Tibial artery (tissue), 4 donors: ENCODE measurements at regions of chrX and their contacts with region 1.

Region 1: DNA sequence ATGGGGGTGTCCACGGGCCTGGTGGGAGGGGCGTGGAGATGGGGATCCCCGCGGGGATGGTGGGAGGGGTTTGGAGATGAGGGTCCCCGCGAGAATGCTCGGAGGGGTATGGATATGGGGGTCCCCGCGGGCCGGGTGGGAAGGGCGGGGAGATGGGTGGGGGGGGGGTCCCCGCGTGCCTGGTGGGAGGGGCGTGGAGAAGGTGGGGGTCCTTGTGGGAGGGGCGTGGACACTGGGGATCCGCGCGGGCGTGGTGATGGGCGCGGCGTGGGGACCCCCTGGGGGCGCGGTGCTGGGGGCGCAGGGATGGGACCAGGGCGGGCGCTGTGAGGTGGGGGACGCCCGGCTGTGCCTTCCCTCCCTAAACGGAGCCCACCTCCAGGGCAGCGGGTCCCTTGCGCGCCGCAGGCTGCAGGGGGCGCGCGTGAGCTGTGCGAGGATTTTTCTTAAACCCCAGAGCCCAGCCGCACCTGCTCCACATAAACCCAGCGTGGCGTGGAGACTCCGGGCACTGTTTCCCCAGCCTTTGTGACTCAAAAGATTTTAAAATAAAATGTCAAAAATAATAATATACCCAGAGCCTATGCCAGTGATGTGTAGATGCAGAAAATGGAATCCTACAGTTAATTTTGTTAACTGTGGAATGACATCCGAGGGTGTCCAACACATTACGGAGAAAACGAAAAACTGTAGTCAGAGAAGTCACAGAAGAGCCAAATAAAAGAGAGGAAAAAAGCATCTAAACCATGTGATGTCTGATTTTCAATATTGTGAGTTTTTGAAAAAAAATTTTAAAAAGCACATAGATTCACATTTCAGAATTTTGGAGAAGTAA is 1.5 kb upstream of the ASMTL start:
- DNase-seq: peak; percentile 82 to 92
- H3K4me3 ChIP-seq: peak overlapping the region; percentile 75 to 86
- H3K27ac ChIP-seq: peak overlapping the region; percentile 87 to 94
- H3K4me1 ChIP-seq: peaks cover 0 to 32% (median 22%) of the 10 kb centered on the region in 4 donors
- H3K27me3 ChIP-seq: no peaks in the 10 kb centered on the region
- CTCF ChIP-seq: peak; percentile 95 to 98

Region 2: DNA sequence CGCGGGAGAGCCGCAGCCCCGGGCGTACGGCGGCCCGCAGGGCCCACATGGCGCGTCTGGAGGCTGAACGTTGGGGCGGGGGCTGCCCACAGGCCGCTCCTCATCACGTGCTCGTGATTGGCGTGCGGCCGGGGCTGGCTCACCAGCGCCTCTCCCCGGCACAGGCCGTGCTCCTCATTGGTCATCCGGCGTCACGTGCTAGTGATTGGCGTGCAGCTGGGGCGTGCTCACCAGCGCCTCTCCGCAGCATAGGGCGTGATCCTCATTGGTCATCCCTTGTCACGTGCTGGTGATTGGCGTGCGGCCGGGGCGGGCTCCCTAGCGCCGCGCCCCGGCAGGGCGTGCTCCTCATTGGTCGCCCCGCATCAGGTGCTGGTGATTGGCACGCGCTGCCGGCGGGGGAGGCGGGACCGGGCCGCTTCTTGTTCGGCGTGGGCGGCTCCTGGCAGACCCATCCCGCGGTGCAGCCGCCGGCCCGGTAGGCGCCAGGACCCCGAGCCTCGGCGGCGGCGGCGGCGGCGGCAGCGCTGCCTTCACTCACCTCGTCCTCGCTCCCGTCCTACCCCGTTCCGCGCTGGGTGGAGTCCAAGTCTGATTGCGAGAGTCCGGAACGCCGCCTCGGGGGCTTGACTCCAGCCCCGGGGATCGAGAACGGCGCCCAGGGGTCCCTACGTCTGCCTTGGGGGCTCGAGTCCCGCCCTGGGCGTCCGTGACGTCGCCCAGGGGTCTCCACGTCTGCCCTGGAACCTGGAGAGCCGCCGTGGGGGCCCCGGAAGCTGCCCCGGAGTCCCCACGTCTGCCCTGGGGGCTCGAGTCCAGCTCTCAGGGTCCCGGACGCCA is 1135.2 kb before region 1 on chrX and contains the start of gene GTPBP6:
- intact Hi-C with region 1: loop called (anchors 5 kb)
- DNase-seq: peak; percentile 99 to 100
- H3K4me3 ChIP-seq: peak within 1 kb of the TSS; percentile 76 to 97
- H3K27ac ChIP-seq: peak within 1 kb of the TSS; percentile 91 to 95
- H3K4me1 ChIP-seq: peaks cover 0 to 35% (median 17%) of the 10 kb centered on the region in 4 donors
- H3K27me3 ChIP-seq: peaks cover 0 to 4% of the 10 kb centered on the region in 2 donors
- CTCF ChIP-seq: peak in 1 of 2 experiments; percentile 28

Region 3: GRCh38 chrX:1178580-1179057 is 275.5 kb before region 1 on chrX:
- intact Hi-C with region 1: no loop called
- DNase-seq: no peak
- H3K4me3 ChIP-seq: no peak overlapping the region
- H3K27ac ChIP-seq: no peak overlapping the region
- H3K4me1 ChIP-seq: peaks cover 0 to 7% (median 0%) of the 10 kb centered on the region in 4 donors
- H3K27me3 ChIP-seq: peaks cover 0 to 3% of the 10 kb centered on the region in 2 donors
- CTCF ChIP-seq: no peak

Region 4: DNA sequence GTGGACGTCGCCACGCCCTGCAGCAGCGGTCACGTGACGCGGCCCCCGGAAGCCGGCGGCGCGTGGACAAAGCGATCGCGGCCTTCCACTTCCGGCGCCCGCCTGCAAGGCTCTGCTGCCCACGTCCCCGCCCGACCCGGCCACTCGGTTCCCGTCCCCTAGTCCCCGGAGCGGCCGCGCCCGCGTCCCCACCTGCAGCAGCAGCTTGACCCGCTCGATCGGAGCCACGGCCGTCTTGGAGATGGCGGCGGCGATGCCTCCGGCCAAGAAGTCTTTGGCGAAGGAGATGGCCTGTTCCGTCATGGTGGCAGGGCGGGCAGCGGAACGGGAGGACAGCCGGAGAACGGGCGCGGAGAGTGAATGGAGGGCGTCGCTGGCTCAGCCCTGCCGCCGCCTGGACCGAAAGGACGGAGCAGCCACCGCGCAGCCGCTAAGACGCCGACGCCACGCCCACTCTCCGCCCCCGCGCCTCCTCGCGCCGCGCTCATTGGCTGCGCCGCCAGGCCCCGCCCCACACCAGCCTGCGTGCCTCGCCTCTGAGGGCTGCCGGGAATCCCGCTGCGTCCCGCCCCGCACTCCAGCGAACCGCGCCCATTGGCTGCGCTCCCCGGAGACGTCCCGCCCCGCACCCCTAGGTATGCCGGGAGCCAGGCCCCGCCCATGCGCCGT is 62.3 kb before region 1 on chrX and contains the start of gene SLC25A6:
- intact Hi-C with region 1: loop called (anchors 2 kb)
- DNase-seq: peak; percentile 97 to 99
- H3K4me3 ChIP-seq: peak within 1 kb of the TSS; percentile 89 to 92
- H3K27ac ChIP-seq: peak within 1 kb of the TSS; percentile 97 to 98
- H3K4me1 ChIP-seq: peaks cover 0 to 54% (median 43%) of the 10 kb centered on the region in 4 donors
- H3K27me3 ChIP-seq: no peaks in the 10 kb centered on the region
- CTCF ChIP-seq: peak; percentile 5 to 19

Region 5: GRCh38 chrX:1580735-1581531 is 126.8 kb after region 1 on chrX:
- intact Hi-C with region 1: loop called (anchors 2 kb)
- DNase-seq: no peak
- H3K4me3 ChIP-seq: no peak overlapping the region
- H3K27ac ChIP-seq: no peak overlapping the region
- H3K4me1 ChIP-seq: no peaks in the 10 kb centered on the region
- H3K27me3 ChIP-seq: no peaks in the 10 kb centered on the region
- CTCF ChIP-seq: peak; percentile 61 to 69

Region 6: GRCh38 chrX:1591102-1591900 is 137.1 kb after region 1 on chrX and contains the start of gene AKAP17A:
- intact Hi-C with region 1: loop called (anchors 5 kb)
- DNase-seq: peak; percentile 92 to 98
- H3K4me3 ChIP-seq: peak within 1 kb of the TSS; percentile 77 to 83
- H3K27ac ChIP-seq: peak within 1 kb of the TSS; percentile 76 to 86
- H3K4me1 ChIP-seq: peaks cover 0 to 22% (median 18%) of the 10 kb centered on the region in 4 donors
- H3K27me3 ChIP-seq: no peaks in the 10 kb centered on the region
- CTCF ChIP-seq: no peak

Region 7: DNA sequence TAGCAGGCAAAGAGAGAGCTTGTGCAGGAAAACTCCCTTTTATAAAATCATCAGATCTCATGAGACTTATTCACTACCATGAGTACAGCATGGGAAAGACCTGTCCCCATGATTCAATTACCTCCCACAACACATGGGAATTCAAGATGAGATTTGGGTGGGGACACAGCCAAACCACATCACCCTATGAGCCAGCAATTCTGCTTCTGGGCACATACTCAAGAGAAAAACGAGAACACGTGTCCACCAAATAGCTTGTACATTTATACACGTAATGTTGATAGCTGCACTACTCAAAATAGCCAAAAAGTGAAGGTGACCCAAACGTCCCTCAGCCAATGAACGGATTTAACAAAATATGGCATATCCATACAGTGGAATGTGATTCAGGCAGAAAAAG is 1141.1 kb after region 1 on chrX:
- intact Hi-C with region 1: loop called (anchors 10 kb)
- DNase-seq: peak in 1 of 2 donors; percentile 3
- H3K4me3 ChIP-seq: no peak overlapping the region
- H3K27ac ChIP-seq: no peak overlapping the region
- H3K4me1 ChIP-seq: no peaks in the 10 kb centered on the region
- H3K27me3 ChIP-seq: no peaks in the 10 kb centered on the region
- CTCF ChIP-seq: no peak

Region 8: GRCh38 chrX:3191201-3191600 is 1737.0 kb after region 1 on chrX:
- intact Hi-C with region 1: loop called (anchors 5 kb)
- DNase-seq: no peak
- H3K4me3 ChIP-seq: no peak overlapping the region
- H3K27ac ChIP-seq: no peak overlapping the region
- H3K4me1 ChIP-seq: no peaks in the 10 kb centered on the region
- H3K27me3 ChIP-seq: no peaks in the 10 kb centered on the region
- CTCF ChIP-seq: no peak